CD8-positive, alpha-beta T cell (primary cell): ENCODE measurements at regions of chr12 and their contacts with region 1.

Region 1: DNA sequence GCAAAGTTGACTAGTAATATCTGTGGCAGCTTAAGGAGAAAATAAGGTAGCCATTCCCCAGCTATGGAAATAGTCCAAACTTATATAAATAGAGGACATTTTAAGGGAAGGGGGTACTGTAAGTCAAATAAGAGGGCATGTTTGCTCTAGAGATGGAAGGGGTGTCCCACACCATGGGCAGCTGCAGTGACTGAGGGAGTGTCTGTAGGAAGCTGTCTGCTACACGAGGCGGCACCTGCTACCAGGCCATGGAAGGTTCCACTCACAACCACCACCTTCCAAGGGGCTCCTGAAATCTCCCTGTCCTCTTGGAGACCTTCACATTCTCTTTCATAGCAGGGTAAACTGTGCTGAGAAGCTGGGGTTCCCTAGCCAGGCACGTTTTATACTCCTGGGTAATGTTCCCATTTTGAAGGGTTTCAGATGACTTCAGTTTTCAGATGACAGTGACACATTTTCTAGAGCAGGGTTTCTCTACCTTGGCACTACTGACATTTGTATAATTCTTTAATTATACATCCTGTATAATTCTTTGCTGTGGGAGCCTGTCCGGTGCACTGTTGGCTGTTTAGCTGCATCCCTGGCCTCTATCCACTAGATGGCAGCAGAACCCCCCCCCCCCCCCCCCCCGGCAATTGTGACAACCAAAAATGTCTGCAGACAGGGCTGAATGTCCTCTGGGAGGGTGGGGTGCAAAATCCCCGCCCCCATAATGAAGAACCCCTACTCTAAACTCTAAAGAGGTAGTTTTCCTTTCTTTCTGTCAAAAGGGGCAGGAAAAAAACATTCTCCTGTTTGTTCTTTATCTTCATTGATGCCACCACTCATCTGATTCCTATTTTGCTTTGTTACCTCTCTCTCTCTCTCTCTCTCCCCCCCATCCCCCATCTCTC is 11.6 kb upstream of the SMCO2 start:
- DNase-seq: peak in 5 of 9 experiments; percentile 6 to 41 (median 19)
- ATAC-seq: peak; percentile 55
- H3K4me3 ChIP-seq: no peak overlapping the region
- H3K4me3 Mint-ChIP-seq: no peak overlapping the region
- H3K27ac ChIP-seq: no peak overlapping the region
- H3K27ac Mint-ChIP-seq: no peak overlapping the region
- H3K4me1 ChIP-seq: no peaks in the 10 kb centered on the region
- H3K4me1 Mint-ChIP-seq: peaks cover 4% of the 10 kb centered on the region
- H3K27me3 ChIP-seq: peaks cover 0 to 3% of the 10 kb centered on the region in 2 experiments
- H3K27me3 Mint-ChIP-seq: peaks cover 18% of the 10 kb centered on the region
- CTCF ChIP-seq: peak; percentile 64

Region 2: GRCh38 chr12:27161458-27162228 is 273.3 kb before region 1 on chr12:
- CTCF ChIA-PET with region 1: no interaction called
- POLR2A ChIA-PET with region 1: no interaction called
- intact Hi-C with region 1: no loop called
- DNase-seq: no peak
- ATAC-seq: no peak
- H3K4me3 ChIP-seq: no peak overlapping the region
- H3K4me3 Mint-ChIP-seq: no peak overlapping the region
- H3K27ac ChIP-seq: no peak overlapping the region
- H3K27ac Mint-ChIP-seq: no peak overlapping the region
- H3K4me1 ChIP-seq: no peaks in the 10 kb centered on the region
- H3K4me1 Mint-ChIP-seq: no peaks in the 10 kb centered on the region
- H3K27me3 ChIP-seq: no peaks in the 10 kb centered on the region
- H3K27me3 Mint-ChIP-seq: no peaks in the 10 kb centered on the region
- CTCF ChIP-seq: no peak

Region 3: DNA sequence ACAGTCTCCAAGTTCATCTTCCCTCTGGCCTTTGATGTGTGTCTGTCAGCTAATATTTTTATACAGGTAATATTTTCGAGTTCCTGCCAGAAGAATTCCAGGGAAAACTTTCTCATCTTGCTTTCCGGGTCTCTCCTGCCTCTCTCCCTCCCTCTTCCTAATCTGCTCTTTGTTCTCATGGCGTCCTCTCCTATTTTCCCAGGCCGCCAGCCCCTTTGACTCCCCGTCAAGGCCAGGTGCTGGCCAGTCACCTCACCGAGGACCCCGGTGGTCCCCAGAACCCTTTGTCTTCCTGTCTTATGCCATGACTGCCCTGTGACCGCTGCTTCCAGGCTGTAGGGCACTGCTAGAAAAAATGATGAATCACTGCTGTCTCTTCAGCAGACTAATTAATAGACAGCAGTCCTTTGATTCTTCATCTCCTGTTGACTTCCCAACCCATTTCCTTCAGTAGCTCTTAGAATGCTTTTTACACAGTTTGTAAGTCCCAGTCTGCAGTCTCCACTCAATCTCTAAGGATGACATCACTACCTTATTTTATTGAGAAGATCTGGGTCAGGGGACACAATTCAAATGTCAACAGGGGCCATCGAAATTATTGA is 129.8 kb after region 1 on chr12:
- CTCF ChIA-PET with region 1: interaction called, 7 read pairs
- POLR2A ChIA-PET with region 1: no interaction called
- intact Hi-C with region 1: loop called in 1 of 2 experiments (anchors 10 kb)
- DNase-seq: no peak
- ATAC-seq: no peak
- H3K4me3 ChIP-seq: no peak overlapping the region
- H3K4me3 Mint-ChIP-seq: no peak overlapping the region
- H3K27ac ChIP-seq: no peak overlapping the region
- H3K27ac Mint-ChIP-seq: no peak overlapping the region
- H3K4me1 ChIP-seq: no peaks in the 10 kb centered on the region
- H3K4me1 Mint-ChIP-seq: no peaks in the 10 kb centered on the region
- H3K27me3 ChIP-seq: no peaks in the 10 kb centered on the region
- H3K27me3 Mint-ChIP-seq: peaks cover 3% of the 10 kb centered on the region
- CTCF ChIP-seq: no peak

Region 4: DNA sequence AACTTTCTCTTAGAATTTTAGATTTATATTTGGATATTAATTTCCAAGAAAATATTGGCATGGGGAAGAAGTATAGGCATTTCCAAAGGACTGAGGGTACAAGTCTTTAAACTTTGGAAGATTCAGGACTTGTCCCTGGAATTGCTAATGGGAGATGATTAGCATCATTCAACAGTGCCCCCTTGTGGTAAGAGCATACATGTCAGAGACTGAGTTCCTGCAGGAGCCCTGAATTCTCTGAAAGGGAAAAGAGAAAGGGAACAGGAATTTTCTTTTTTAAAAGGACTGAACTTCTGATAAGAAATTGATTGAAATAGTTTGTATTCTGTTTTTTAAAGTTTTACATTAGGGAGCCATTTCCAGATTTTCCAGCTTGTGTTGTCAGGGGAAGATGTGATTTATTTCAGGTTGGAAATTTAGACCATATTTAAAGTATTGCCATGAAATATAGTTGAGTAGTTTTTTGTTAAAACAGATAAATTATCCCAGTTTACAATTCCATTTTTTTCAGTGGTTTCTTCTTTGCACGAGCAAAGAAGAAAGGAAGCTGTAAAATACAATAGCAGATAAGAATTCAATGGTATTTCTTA is 217.3 kb after region 1 on chr12:
- CTCF ChIA-PET with region 1: interaction called, 20 read pairs
- POLR2A ChIA-PET with region 1: no interaction called
- intact Hi-C with region 1: loop called (anchors 1 kb)
- DNase-seq: peak in 6 of 9 experiments; percentile 7 to 67 (median 30)
- ATAC-seq: no peak
- H3K4me3 ChIP-seq: no peak overlapping the region
- H3K4me3 Mint-ChIP-seq: no peak overlapping the region
- H3K27ac ChIP-seq: no peak overlapping the region
- H3K27ac Mint-ChIP-seq: no peak overlapping the region
- H3K4me1 ChIP-seq: no peaks in the 10 kb centered on the region
- H3K4me1 Mint-ChIP-seq: peaks cover 2% of the 10 kb centered on the region
- H3K27me3 ChIP-seq: no peaks in the 10 kb centered on the region
- H3K27me3 Mint-ChIP-seq: no peaks in the 10 kb centered on the region
- CTCF ChIP-seq: peak; percentile 94

Region 5: DNA sequence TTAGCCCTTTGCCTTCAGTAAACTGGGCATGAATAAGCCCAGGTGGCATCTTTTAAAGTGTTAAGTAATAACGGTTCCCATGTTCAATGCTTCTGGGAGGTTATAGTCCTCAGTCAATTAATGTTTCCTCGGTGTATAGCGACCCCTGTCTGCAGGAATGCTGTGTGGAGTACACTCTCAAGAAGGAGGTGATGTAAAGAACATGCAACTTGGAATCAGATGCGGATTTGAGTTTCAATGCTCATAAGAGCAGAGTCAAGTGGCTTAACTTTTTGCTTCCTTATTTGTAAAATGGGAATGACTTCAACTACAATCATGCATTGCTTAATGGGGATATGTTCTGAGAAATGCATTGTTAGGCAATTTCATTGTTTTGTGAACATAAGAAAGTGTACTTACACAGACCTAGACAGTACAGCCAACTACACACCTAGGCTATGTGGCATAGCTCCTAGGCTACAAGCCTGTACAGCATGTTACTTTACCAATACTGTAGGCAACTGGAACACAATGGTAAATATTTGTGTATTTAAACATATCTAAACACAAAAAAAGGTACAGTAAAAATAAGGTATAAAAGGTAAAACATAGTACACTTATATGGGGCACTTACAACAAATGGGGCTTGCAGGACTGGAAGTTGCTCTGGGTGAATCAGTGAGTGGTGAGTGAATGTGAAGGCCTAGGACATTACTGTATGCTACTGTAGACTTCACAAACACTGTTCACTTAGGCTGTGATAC is 269.0 kb after region 1 on chr12:
- CTCF ChIA-PET with region 1: interaction called, 14 read pairs
- POLR2A ChIA-PET with region 1: interaction called, 3 read pairs
- intact Hi-C with region 1: loop called (anchors 1 kb)
- DNase-seq: peak; percentile 32 to 77 (median 64)
- ATAC-seq: peak; percentile 98
- H3K4me3 ChIP-seq: no peak overlapping the region
- H3K4me3 Mint-ChIP-seq: no peak overlapping the region
- H3K27ac ChIP-seq: no peak overlapping the region
- H3K27ac Mint-ChIP-seq: no peak overlapping the region
- H3K4me1 ChIP-seq: no peaks in the 10 kb centered on the region
- H3K4me1 Mint-ChIP-seq: no peaks in the 10 kb centered on the region
- H3K27me3 ChIP-seq: no peaks in the 10 kb centered on the region
- H3K27me3 Mint-ChIP-seq: peaks cover 6% of the 10 kb centered on the region
- CTCF ChIP-seq: peak; percentile 74